Esophagus muscularis mucosa (tissue), 4 donors: ENCODE measurements at regions of chrX and their contacts with region 1.

Region 1: GRCh38 chrX:134782796-134783195 is 124.5 kb upstream of the PLAC1 start:
- DNase-seq: no peak
- H3K4me3 ChIP-seq: no peak overlapping the region
- H3K27ac ChIP-seq: no peak overlapping the region
- H3K4me1 ChIP-seq: no peaks in the 10 kb centered on the region
- H3K27me3 ChIP-seq: no peaks in the 10 kb centered on the region
- CTCF ChIP-seq: peak; percentile 47 to 53 (median 48)
- EP300 ChIP-seq: no peak
- POLR2A ChIP-seq: no peak

Region 2: GRCh38 chrX:134484039-134484438 is 298.8 kb before region 1 on chrX:
- intact Hi-C with region 1: loop called (anchors 5 kb)
- DNase-seq: no peak
- H3K4me3 ChIP-seq: no peak overlapping the region
- H3K27ac ChIP-seq: no peak overlapping the region
- H3K4me1 ChIP-seq: no peaks in the 10 kb centered on the region
- H3K27me3 ChIP-seq: no peaks in the 10 kb centered on the region
- CTCF ChIP-seq: peak; percentile 64 to 69 (median 66)
- EP300 ChIP-seq: no peak
- POLR2A ChIP-seq: no peak

Region 3: GRCh38 chrX:134718105-134718965 is 64.5 kb before region 1 on chrX:
- intact Hi-C with region 1: no loop called
- DNase-seq: no peak
- H3K4me3 ChIP-seq: no peak overlapping the region
- H3K27ac ChIP-seq: no peak overlapping the region
- H3K4me1 ChIP-seq: peaks cover 0 to 5% (median 0%) of the 10 kb centered on the region in 4 donors
- H3K27me3 ChIP-seq: no peaks in the 10 kb centered on the region
- CTCF ChIP-seq: no peak
- EP300 ChIP-seq: no peak
- POLR2A ChIP-seq: no peak

Region 4: GRCh38 chrX:134807039-134807731 is 24.4 kb after region 1 on chrX:
- intact Hi-C with region 1: no loop called
- DNase-seq: peak; percentile 93
- H3K4me3 ChIP-seq: peak overlapping the region; percentile 60 to 68 (median 65)
- H3K27ac ChIP-seq: peak overlapping the region; percentile 82 to 87 (median 84)
- H3K4me1 ChIP-seq: peaks cover 0 to 7% (median 3%) of the 10 kb centered on the region in 4 donors
- H3K27me3 ChIP-seq: no peaks in the 10 kb centered on the region
- CTCF ChIP-seq: no peak
- EP300 ChIP-seq: no peak
- POLR2A ChIP-seq: no peak